Activated CD4-positive, alpha-beta T cell treated with anti-CD3 and anti-CD28 coated beads for 36 hours (primary cell): ENCODE measurements at regions of chr4 and their contacts with region 1.

Region 1: GRCh38 chr4:140373328-140374129 is at the start of gene SCOC:
- DNase-seq: peak; percentile 98
- ATAC-seq: peak; percentile 98
- H3K4me3 Mint-ChIP-seq: no peak within 1 kb of the TSS
- H3K27ac Mint-ChIP-seq: peak within 1 kb of the TSS; percentile 59
- H3K4me1 Mint-ChIP-seq: peaks cover 35% of the 10 kb centered on the region
- H3K27me3 Mint-ChIP-seq: no peaks in the 10 kb centered on the region
- total RNA-seq, gene SCOC: 37.1 to 47.8 TPM

Region 2: GRCh38 chr4:139015269-139015947 is 1358.1 kb before region 1 on chr4 and contains the start of gene NOCT:
- CTCF ChIA-PET with region 1: no interaction called
- POLR2A ChIA-PET with region 1: no interaction called
- intact Hi-C with region 1: loop called in 1 of 2 experiments (anchors 10 kb)
- DNase-seq: peak; percentile 98
- ATAC-seq: peak; percentile 92
- H3K4me3 Mint-ChIP-seq: peak within 1 kb of the TSS; percentile 90
- H3K27ac Mint-ChIP-seq: peak within 1 kb of the TSS; percentile 96
- H3K4me1 Mint-ChIP-seq: peaks cover 41% of the 10 kb centered on the region
- H3K27me3 Mint-ChIP-seq: no peaks in the 10 kb centered on the region
- total RNA-seq, gene NOCT: 16.5 to 20.5 TPM

Region 3: GRCh38 chr4:139453371-139454110 is 920.0 kb before region 1 on chr4:
- CTCF ChIA-PET with region 1: no interaction called
- POLR2A ChIA-PET with region 1: no interaction called
- intact Hi-C with region 1: loop called in 1 of 2 experiments (anchors 1 kb)
- DNase-seq: peak; percentile 99
- ATAC-seq: peak; percentile 90
- H3K4me3 Mint-ChIP-seq: peak overlapping the region; percentile 91
- H3K27ac Mint-ChIP-seq: peak overlapping the region; percentile 98
- H3K4me1 Mint-ChIP-seq: peaks cover 48% of the 10 kb centered on the region
- H3K27me3 Mint-ChIP-seq: no peaks in the 10 kb centered on the region

Region 4: DNA sequence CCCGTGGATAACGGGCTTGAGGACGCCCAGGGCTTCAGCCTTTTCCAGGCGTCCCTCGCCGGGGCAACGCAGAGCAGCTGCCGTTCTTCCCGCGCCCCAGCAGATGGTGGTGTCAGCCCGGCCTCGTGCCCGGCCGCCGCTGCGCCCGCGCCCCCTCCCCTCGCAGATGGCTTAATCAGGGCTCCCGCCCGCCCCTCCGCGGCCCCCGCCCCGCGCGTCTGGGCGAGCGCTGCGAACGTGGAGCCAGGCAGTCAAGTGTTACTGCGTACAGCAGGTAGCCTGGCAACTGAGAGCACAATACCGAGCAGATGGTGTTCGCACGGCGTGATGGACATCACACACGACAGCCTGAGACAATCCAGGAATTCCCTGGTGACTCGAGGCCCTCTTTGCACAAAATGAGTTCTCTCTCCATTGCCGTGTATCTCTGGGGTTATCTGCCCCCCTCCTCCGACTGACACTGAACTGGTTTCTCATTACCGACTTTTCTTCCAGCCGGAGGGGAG is 638.6 kb before region 1 on chr4:
- CTCF ChIA-PET with region 1: no interaction called
- POLR2A ChIA-PET with region 1: interaction called, 3 read pairs
- intact Hi-C with region 1: loop called in 1 of 2 experiments (anchors 1 kb)
- DNase-seq: peak; percentile 86
- ATAC-seq: peak; percentile 83
- H3K4me3 Mint-ChIP-seq: peak overlapping the region; percentile 65
- H3K27ac Mint-ChIP-seq: no peak overlapping the region
- H3K4me1 Mint-ChIP-seq: peaks cover 13% of the 10 kb centered on the region
- H3K27me3 Mint-ChIP-seq: peaks cover 33% of the 10 kb centered on the region

Region 5: GRCh38 chr4:140095694-140096482 is 277.6 kb before region 1 on chr4:
- CTCF ChIA-PET with region 1: no interaction called
- POLR2A ChIA-PET with region 1: no interaction called
- intact Hi-C with region 1: loop called in 1 of 2 experiments (anchors 5 kb)
- DNase-seq: peak; percentile 81
- ATAC-seq: peak; percentile 83
- H3K4me3 Mint-ChIP-seq: peak overlapping the region; percentile 75
- H3K27ac Mint-ChIP-seq: peak overlapping the region; percentile 99
- H3K4me1 Mint-ChIP-seq: peaks cover 93% of the 10 kb centered on the region
- H3K27me3 Mint-ChIP-seq: no peaks in the 10 kb centered on the region

Region 6: GRCh38 chr4:140388015-140388414 is 14.5 kb after region 1 on chr4:
- CTCF ChIA-PET with region 1: interaction called, 12 read pairs
- POLR2A ChIA-PET with region 1: interaction called, 7 read pairs
- intact Hi-C with region 1: no loop called
- DNase-seq: no peak
- ATAC-seq: no peak
- H3K4me3 Mint-ChIP-seq: no peak overlapping the region
- H3K27ac Mint-ChIP-seq: no peak overlapping the region
- H3K4me1 Mint-ChIP-seq: no peaks in the 10 kb centered on the region
- H3K27me3 Mint-ChIP-seq: no peaks in the 10 kb centered on the region

Region 7: DNA sequence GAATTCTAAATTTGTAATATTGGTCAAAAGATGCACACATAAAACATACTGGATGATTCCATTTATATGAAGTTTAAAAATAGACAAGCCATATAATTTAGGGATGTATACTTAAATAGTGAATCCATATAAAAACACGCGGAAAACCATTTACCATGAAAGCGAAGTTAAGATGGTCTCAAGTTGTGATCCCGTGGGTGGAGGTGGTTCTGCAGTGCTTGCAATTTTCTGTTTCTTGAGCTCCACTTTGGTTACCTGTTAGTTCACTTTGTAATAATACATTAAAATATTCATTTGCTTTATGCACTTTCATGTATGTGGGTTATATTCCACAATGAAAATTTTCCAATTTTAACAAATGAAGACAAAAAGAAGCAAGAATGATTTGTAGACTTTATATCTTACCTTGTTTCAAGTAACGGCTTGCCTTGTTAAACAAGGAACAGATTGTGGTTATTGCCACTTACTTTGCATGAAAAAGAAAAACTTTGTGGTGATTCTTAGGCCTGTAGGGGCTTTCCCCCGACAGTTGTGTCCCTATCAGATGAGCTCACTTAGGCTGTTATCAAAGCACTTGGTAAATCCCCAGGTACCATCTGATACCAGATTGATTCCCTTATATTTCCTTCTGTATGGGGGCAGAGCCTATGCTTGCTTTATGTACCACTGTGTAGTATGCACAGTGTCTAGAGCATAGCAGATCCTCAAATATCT is 183.0 kb after region 1 on chr4:
- CTCF ChIA-PET with region 1: interaction called, 3 read pairs
- POLR2A ChIA-PET with region 1: no interaction called
- intact Hi-C with region 1: loop called in 1 of 2 experiments (anchors 1 kb)
- DNase-seq: peak; percentile 37
- ATAC-seq: peak; percentile 99
- H3K4me3 Mint-ChIP-seq: no peak overlapping the region
- H3K27ac Mint-ChIP-seq: no peak overlapping the region
- H3K4me1 Mint-ChIP-seq: peaks cover 18% of the 10 kb centered on the region
- H3K27me3 Mint-ChIP-seq: peaks cover 18% of the 10 kb centered on the region